HepG2 (cell line): ENCODE measurements at regions of chr10 and their contacts with region 1.

Region 1: DNA sequence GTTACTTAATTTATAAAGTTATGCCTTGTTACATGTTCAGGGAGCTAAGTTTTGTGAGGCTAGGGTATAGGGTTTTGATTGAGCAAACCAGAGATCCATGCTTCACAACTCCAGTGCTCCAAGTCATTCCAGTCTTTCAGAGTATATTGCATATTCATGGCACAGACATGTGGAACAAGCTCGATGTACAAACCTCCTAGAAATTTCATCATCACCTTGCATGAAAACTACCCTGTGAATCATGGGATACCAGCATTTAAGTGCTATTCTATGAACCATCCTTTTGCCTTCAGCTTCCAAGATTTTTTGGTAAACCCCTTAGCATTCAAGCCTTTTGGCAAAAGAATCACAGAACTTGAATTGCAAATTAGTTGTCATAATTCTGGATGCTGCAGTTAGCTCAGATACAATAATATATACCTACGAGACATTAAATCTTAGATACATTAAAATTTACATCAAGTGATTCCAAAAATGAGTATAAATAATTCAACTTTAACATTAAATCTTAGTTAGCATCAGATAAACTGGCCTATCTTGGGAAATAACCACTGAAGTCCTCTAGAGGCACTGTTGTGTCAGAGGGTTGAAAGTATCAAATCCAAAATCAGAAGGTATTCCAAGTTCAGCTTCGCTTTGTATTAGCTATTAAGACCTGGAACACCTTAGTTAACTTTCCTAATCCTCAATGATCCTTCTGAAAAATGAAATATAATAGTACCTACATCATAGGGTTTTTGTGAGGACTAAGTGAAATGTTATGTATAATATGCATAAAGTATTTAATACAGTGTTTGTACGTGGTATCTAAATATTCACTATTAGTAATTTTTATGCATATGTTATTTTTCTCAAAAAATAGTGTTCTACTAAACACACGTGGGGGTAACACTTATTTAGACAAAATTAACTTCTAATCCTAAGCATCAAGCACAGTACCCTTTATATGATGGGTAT is 55.5 kb upstream of the CABCOCO1 start:
- DNase-seq: peak; percentile 14
- ATAC-seq: peak; percentile 50
- H3K4me3 ChIP-seq: no peak overlapping the region
- H3K27ac ChIP-seq: no peak overlapping the region
- H3K4me1 ChIP-seq: no peaks in the 10 kb centered on the region
- H3K27me3 ChIP-seq: no peaks in the 10 kb centered on the region; a peak in 1 of 5 replicates
- CTCF ChIP-seq: peak; percentile 23; the same call in 1 of the 2 replicates
- EP300 ChIP-seq: no peak
- POLR2A ChIP-seq: no peak
- RAD21 ChIP-seq: no peak

Region 2: GRCh38 chr10:61733358-61733940 is 126.2 kb after region 1 on chr10:
- CTCF ChIA-PET with region 1: no interaction called
- POLR2A ChIA-PET with region 1: no interaction called
- in situ Hi-C with region 1: no loop called
- intact Hi-C with region 1: loop called (anchors 5 kb)
- DNase-seq: peak; percentile 33
- ATAC-seq: peak; percentile 53; the same call in 2 of the 3 replicates
- H3K4me3 ChIP-seq: no peak overlapping the region
- H3K27ac ChIP-seq: no peak overlapping the region
- H3K4me1 ChIP-seq: no peaks in the 10 kb centered on the region
- H3K27me3 ChIP-seq: peaks cover 0 to 1% of the 10 kb centered on the region in 2 experiments; a peak in 1 of 5 replicates
- CTCF ChIP-seq: peak; percentile 58
- EP300 ChIP-seq: no peak
- POLR2A ChIP-seq: no peak
- RAD21 ChIP-seq: no peak